WTC11 (cell line): ENCODE measurements at regions of chr1 and their contacts with region 1.

Region 1: DNA sequence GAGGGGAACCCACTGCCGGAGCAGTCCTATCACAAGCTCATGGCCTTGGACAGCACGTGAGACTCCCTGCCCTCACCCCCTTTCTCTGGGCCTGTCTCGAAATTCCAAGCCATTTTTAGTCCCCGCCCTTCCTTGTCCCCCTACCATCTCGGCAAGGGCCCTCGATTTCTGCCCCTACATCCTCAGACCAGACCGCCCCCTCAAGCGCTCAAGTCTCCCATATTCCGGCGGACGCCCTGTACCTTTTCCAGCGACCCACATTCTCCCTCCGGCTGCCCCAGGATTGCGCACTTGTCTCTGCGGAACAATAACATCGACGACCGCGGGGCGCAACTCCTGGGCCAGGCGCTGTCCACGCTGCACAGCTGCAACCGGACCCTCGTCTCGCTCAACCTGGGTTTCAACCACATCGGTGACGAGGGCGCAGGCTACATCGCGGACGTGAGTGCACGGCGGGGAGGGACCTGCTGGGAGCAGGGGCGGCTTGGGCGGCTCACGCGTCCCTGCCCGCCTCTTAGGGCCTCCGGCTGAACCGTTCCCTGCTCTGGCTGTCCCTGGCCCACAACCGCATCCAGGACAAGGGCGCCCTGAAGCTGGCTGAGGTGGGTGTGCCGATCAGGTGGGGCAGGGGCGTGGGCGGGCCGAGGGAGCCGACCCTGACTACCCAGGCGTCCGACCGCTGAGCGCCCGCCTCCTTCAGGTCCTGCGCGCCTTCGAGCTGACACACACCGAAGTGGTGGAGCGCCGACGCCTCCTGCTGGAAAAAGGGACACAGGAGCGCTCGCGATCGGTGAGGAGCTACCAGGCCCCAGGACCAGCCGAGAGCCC is 7.0 kb downstream of the LRRC71 start:
- DNase-seq: peak; percentile 92
- ATAC-seq: peak; percentile 83
- H3K4me3 Mint-ChIP-seq: peak overlapping the region; percentile 68
- H3K27ac Mint-ChIP-seq: no peak overlapping the region
- H3K4me1 Mint-ChIP-seq: peaks cover 21% of the 10 kb centered on the region
- H3K27me3 Mint-ChIP-seq: peaks cover 91% of the 10 kb centered on the region
- CTCF ChIP-seq: peak; percentile 52; the same call in 1 of the 2 replicates

Region 2: GRCh38 chr1:156456622-156457465 is 470.6 kb before region 1 on chr1:
- CTCF ChIA-PET with region 1: no interaction called
- POLR2A ChIA-PET with region 1: no interaction called
- DNase-seq: peak; percentile 97
- ATAC-seq: peak; percentile 84
- H3K4me3 Mint-ChIP-seq: peak overlapping the region; percentile 89
- H3K27ac Mint-ChIP-seq: peak overlapping the region; percentile 99
- H3K4me1 Mint-ChIP-seq: peaks cover 15% of the 10 kb centered on the region
- H3K27me3 Mint-ChIP-seq: no peaks in the 10 kb centered on the region
- CTCF ChIP-seq: no peak

Region 3: GRCh38 chr1:156794506-156795373 is 132.7 kb before region 1 on chr1:
- CTCF ChIA-PET with region 1: no interaction called
- POLR2A ChIA-PET with region 1: no interaction called
- DNase-seq: no peak
- ATAC-seq: no peak
- H3K4me3 Mint-ChIP-seq: no peak overlapping the region
- H3K27ac Mint-ChIP-seq: no peak overlapping the region
- H3K4me1 Mint-ChIP-seq: no peaks in the 10 kb centered on the region
- H3K27me3 Mint-ChIP-seq: no peaks in the 10 kb centered on the region
- CTCF ChIP-seq: no peak

Region 4: GRCh38 chr1:156813750-156814570 is 113.5 kb before region 1 on chr1:
- CTCF ChIA-PET with region 1: interaction called, 11 read pairs
- POLR2A ChIA-PET with region 1: no interaction called
- DNase-seq: peak; percentile 87
- ATAC-seq: peak; percentile 88
- H3K4me3 Mint-ChIP-seq: peak overlapping the region; percentile 62
- H3K27ac Mint-ChIP-seq: no peak overlapping the region
- H3K4me1 Mint-ChIP-seq: peaks cover 22% of the 10 kb centered on the region
- H3K27me3 Mint-ChIP-seq: peaks cover 59% of the 10 kb centered on the region
- CTCF ChIP-seq: no peak

Region 5: GRCh38 chr1:156852418-156852874 is 75.0 kb before region 1 on chr1:
- CTCF ChIA-PET with region 1: interaction called, 66 read pairs
- POLR2A ChIA-PET with region 1: no interaction called
- DNase-seq: no peak
- ATAC-seq: no peak
- H3K4me3 Mint-ChIP-seq: no peak overlapping the region
- H3K27ac Mint-ChIP-seq: no peak overlapping the region
- H3K4me1 Mint-ChIP-seq: peaks cover 10% of the 10 kb centered on the region
- H3K27me3 Mint-ChIP-seq: peaks cover 89% of the 10 kb centered on the region
- CTCF ChIP-seq: no peak

Region 6: GRCh38 chr1:156884560-156885184 is 42.8 kb before region 1 on chr1:
- CTCF ChIA-PET with region 1: interaction called, 233 read pairs
- POLR2A ChIA-PET with region 1: no interaction called
- DNase-seq: no peak
- ATAC-seq: no peak; the same call in 1 of the 2 replicates
- H3K4me3 Mint-ChIP-seq: no peak overlapping the region
- H3K27ac Mint-ChIP-seq: no peak overlapping the region
- H3K4me1 Mint-ChIP-seq: peaks cover 30% of the 10 kb centered on the region
- H3K27me3 Mint-ChIP-seq: peaks cover 35% of the 10 kb centered on the region
- CTCF ChIP-seq: no peak

Region 7: GRCh38 chr1:156898161-156898566 is 29.3 kb before region 1 on chr1:
- CTCF ChIA-PET with region 1: interaction called, 233 read pairs
- POLR2A ChIA-PET with region 1: no interaction called
- DNase-seq: no peak
- ATAC-seq: no peak
- H3K4me3 Mint-ChIP-seq: no peak overlapping the region
- H3K27ac Mint-ChIP-seq: no peak overlapping the region
- H3K4me1 Mint-ChIP-seq: peaks cover 20% of the 10 kb centered on the region
- H3K27me3 Mint-ChIP-seq: peaks cover 37% of the 10 kb centered on the region
- CTCF ChIP-seq: no peak

Region 8: GRCh38 chr1:157073944-157074767 is 146.7 kb after region 1 on chr1:
- CTCF ChIA-PET with region 1: interaction called, 17 read pairs
- POLR2A ChIA-PET with region 1: no interaction called
- DNase-seq: peak; percentile 83
- ATAC-seq: peak; percentile 67
- H3K4me3 Mint-ChIP-seq: no peak overlapping the region
- H3K27ac Mint-ChIP-seq: no peak overlapping the region
- H3K4me1 Mint-ChIP-seq: peaks cover 9% of the 10 kb centered on the region
- H3K27me3 Mint-ChIP-seq: peaks cover 11% of the 10 kb centered on the region
- CTCF ChIP-seq: peak; percentile 46; the same call in 1 of the 2 replicates